Heart right ventricle (tissue), 16 donors: ENCODE measurements at regions of chr9 and their contacts with region 1.

Region 1: GRCh38 chr9:6460189-6460768 is 47.3 kb downstream of the UHRF2 start:
- DNase-seq: no peak
- ATAC-seq: no peak
- H3K4me3 ChIP-seq: no peak overlapping the region
- H3K27ac ChIP-seq: no peak overlapping the region
- H3K4me1 ChIP-seq: no peaks in the 10 kb centered on the region
- H3K27me3 ChIP-seq: no peaks in the 10 kb centered on the region
- CTCF ChIP-seq: no peak

Region 2: GRCh38 chr9:6441269-6441668 is 19.0 kb before region 1 on chr9:
- intact Hi-C with region 1: loop called in 1 of 10 experiments (anchors 2 kb)
- DNase-seq: no peak
- ATAC-seq: no peak
- H3K4me3 ChIP-seq: no peak overlapping the region
- H3K27ac ChIP-seq: no peak overlapping the region
- H3K4me1 ChIP-seq: peaks cover 0 to 60% (median 29%) of the 10 kb centered on the region in 9 donors
- H3K27me3 ChIP-seq: no peaks in the 10 kb centered on the region
- CTCF ChIP-seq: no peak

Region 3: GRCh38 chr9:6506571-6506970 is 46.3 kb after region 1 on chr9:
- intact Hi-C with region 1: no loop called
- DNase-seq: no peak
- ATAC-seq: no peak
- H3K4me3 ChIP-seq: no peak overlapping the region
- H3K27ac ChIP-seq: no peak overlapping the region
- H3K4me1 ChIP-seq: no peaks in the 10 kb centered on the region
- H3K27me3 ChIP-seq: no peaks in the 10 kb centered on the region
- CTCF ChIP-seq: no peak